ENCODE measurements at regions of chr18 and their contacts with region 1.

Region 1: GRCh38 chr18:14086458-14087231 is 45.6 kb downstream of the ZNF519 start:
- DNase-seq: peak; percentile 13
- ATAC-seq: peak; percentile 60
- H3K4me3 Mint-ChIP-seq: no peak overlapping the region
- H3K27ac Mint-ChIP-seq: no peak overlapping the region
- H3K4me1 Mint-ChIP-seq: no peaks in the 10 kb centered on the region
- H3K27me3 Mint-ChIP-seq: peaks cover 4% of the 10 kb centered on the region
- CTCF ChIP-seq: peak; percentile 78

Region 2: GRCh38 chr18:13813271-13813849 is 273.3 kb before region 1 on chr18:
- CTCF ChIA-PET with region 1: interaction called, 40 read pairs
- POLR2A ChIA-PET with region 1: no interaction called
- intact Hi-C with region 1: no loop called
- DNase-seq: peak; percentile 71
- ATAC-seq: peak; percentile 93
- H3K4me3 Mint-ChIP-seq: no peak overlapping the region
- H3K27ac Mint-ChIP-seq: no peak overlapping the region
- H3K4me1 Mint-ChIP-seq: no peaks in the 10 kb centered on the region
- H3K27me3 Mint-ChIP-seq: no peaks in the 10 kb centered on the region
- CTCF ChIP-seq: peak; percentile 92

Region 3: DNA sequence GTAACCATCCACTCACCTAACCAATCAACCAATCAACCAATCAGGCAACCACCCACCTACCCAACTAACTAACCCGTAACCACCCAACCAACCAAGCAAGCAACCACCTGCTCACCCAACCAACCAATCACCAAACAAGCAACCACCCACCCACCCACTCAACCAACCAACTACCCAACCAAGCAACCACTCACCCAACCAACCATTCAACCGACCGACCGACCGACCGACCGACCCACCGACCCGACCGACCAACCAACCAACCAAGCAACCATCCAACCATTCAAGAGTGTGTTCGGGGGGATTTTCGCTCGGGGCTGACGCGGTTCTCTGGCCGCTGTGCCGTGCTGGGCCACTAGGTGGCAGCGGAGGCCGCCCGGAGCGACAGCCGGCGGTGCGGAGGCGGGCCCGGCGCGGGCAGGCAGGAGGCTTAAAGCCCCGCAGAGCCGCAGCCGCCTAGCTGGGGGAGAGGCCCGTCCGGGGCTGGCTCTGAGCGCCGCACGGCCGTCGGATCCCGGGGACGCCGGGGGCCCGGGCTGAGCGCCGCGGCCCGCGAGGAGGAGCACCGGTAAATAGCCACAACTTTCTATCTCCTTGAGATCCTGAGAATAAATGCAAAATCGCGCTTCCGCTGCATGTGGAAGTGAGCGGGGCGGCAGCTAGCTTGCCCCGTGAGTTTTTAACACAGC is 262.8 kb before region 1 on chr18 and contains the start of gene MC5R:
- CTCF ChIA-PET with region 1: interaction called, 21 read pairs
- POLR2A ChIA-PET with region 1: no interaction called
- intact Hi-C with region 1: loop called (anchors 5 kb)
- DNase-seq: peak; percentile 79
- ATAC-seq: peak; percentile 99
- H3K4me3 Mint-ChIP-seq: peak within 1 kb of the TSS; percentile 13
- H3K27ac Mint-ChIP-seq: no peak within 1 kb of the TSS
- H3K4me1 Mint-ChIP-seq: peaks cover 2% of the 10 kb centered on the region
- H3K27me3 Mint-ChIP-seq: peaks cover 25% of the 10 kb centered on the region
- CTCF ChIP-seq: peak; percentile 83
- total RNA-seq, gene MC5R: not detected

Region 4: GRCh38 chr18:13831864-13832508 is 254.7 kb before region 1 on chr18:
- CTCF ChIA-PET with region 1: interaction called, 12 read pairs
- POLR2A ChIA-PET with region 1: no interaction called
- intact Hi-C with region 1: no loop called
- DNase-seq: no peak
- ATAC-seq: no peak
- H3K4me3 Mint-ChIP-seq: no peak overlapping the region
- H3K27ac Mint-ChIP-seq: no peak overlapping the region
- H3K4me1 Mint-ChIP-seq: no peaks in the 10 kb centered on the region
- H3K27me3 Mint-ChIP-seq: peaks cover 24% of the 10 kb centered on the region
- CTCF ChIP-seq: no peak

Region 5: DNA sequence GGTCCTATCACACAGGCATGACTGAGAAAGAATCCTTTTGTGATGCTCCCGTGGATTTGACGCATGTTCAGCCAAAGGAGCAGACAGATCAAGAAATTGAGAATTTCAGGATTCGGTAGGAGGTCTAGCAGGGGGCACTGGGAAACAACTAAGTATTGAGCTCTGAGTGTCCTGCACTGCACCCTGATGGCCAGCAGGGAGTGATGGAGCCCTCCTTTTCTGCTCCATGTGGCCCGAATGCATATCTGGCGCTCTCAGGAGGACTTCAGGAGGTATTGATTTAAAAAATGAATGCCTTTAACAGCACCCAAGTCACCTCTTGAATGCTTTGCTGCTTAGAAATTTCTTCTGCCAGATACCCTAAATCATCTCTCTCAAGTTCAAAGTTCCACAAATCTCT is 12.5 kb before region 1 on chr18:
- CTCF ChIA-PET with region 1: interaction called, 23 read pairs
- POLR2A ChIA-PET with region 1: no interaction called
- intact Hi-C with region 1: no loop called
- DNase-seq: peak; percentile 15
- ATAC-seq: peak; percentile 37
- H3K4me3 Mint-ChIP-seq: no peak overlapping the region
- H3K27ac Mint-ChIP-seq: no peak overlapping the region
- H3K4me1 Mint-ChIP-seq: no peaks in the 10 kb centered on the region
- H3K27me3 Mint-ChIP-seq: no peaks in the 10 kb centered on the region
- CTCF ChIP-seq: no peak

Region 6: DNA sequence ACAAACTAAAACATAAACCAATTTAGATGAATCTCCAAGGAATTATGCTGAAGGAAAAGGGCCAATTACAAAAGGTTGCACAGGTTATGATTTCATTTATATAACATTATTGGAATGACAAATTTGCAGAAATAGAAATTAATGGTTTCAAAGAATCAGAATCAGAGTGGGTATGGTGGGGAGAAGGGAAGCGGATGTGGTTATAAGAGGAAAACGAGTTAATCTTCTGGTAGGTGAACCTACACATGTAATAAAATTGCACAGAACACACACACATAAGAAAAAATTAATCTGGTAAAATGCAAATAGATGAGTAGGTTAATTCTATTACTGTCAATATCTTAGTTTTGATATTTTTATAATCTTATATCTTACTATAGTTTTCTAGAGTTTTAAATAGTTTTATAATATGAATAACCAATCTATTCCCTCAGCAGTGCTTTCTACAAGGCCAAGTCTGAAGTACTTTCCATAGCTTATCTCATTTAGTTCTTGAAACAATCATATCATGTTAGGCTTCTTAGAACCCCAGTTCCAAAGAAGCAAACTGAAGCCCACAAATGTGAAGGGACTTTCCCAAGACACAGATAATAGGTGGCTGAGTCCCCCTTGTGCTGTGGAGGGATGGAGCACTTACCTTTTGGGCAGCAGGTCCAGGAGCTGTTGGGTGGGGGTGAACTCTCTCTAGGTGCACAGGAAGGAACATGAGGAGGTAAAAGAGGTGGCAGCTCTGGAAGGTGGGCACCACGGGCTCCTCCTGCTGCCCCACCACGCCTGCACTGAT is 14.1 kb after region 1 on chr18:
- CTCF ChIA-PET with region 1: interaction called, 15 read pairs
- POLR2A ChIA-PET with region 1: no interaction called
- intact Hi-C with region 1: no loop called
- DNase-seq: peak; percentile 37
- ATAC-seq: peak; percentile 85
- H3K4me3 Mint-ChIP-seq: no peak overlapping the region
- H3K27ac Mint-ChIP-seq: peak overlapping the region; percentile 85
- H3K4me1 Mint-ChIP-seq: peaks cover 36% of the 10 kb centered on the region
- H3K27me3 Mint-ChIP-seq: no peaks in the 10 kb centered on the region
- CTCF ChIP-seq: no peak